ENCODE measurements at regions of chr11 and their contacts with region 1.

Region 1: DNA sequence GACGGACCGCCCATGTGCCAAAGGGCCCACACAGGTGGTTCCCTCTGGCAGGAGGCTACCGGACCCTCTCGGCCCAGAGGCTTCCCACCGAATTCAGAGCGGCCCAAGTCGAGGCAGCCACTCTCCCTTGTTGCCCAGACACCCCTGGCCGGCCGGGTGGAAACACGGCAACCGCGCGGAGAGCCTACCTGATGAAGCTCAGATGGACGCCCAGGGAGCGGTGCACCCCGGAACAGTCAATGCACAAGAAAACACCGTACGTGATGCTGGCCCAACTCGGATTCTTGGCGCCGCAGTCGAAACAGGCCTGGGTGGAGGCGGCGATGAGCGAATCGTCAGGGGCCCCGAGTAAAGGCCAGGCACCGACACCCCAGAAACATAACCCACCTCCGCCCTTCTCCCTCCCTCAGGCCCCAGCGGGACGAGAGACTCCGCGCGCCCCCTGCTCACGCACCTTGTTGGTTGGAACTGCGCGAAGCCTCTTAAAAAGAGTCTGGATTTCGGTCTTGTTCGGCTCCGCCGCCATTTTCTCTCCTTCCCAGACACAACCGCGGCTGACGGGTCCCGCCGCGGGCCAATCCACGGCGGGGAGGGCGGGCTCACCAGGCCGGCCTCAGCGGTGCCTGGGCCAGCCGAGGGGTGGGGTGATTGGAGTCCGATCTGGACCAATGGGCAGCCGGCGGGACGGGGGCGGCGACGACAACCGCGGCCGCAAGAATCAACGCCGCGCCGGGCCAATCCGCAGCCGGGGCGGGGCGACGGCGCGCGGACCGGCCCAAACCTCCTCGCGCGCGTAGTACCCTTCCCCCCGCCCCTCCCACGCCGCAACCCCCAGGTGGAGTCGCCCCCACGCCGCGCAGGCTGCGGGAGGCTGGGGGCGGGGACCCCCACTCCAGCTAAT is at the start of gene ARFGAP2:
- DNase-seq: peak; percentile 98
- ATAC-seq: peak; percentile 90
- H3K4me3 ChIP-seq: peak within 1 kb of the TSS; percentile 78 to 98 (median 96)
- H3K4me3 Mint-ChIP-seq: peak within 1 kb of the TSS; percentile 100
- H3K27ac ChIP-seq: peak within 1 kb of the TSS; percentile 92
- H3K27ac Mint-ChIP-seq: peak within 1 kb of the TSS; percentile 100
- H3K4me1 ChIP-seq: peaks cover 17 to 28% of the 10 kb centered on the region in 2 donors
- H3K4me1 Mint-ChIP-seq: peaks cover 33% of the 10 kb centered on the region
- H3K27me3 ChIP-seq: no peaks in the 10 kb centered on the region
- H3K27me3 Mint-ChIP-seq: no peaks in the 10 kb centered on the region
- CTCF ChIP-seq: no peak
- total RNA-seq, gene ARFGAP2: 200 and 214 TPM in 2 replicates

Region 2: GRCh38 chr11:46700241-46701077 is 476.1 kb before region 1 on chr11 and contains the starts of genes ARHGAP1 and ZNF408:
- CTCF ChIA-PET with region 1: no interaction called
- POLR2A ChIA-PET with region 1: no interaction called
- intact Hi-C with region 1: loop called (anchors 5 kb)
- DNase-seq: peak; percentile 99
- ATAC-seq: peak; percentile 90
- H3K4me3 ChIP-seq: peak within 1 kb of the TSS; percentile 87 to 100 (median 98)
- H3K4me3 Mint-ChIP-seq: peak within 1 kb of the TSS; percentile 96
- H3K27ac ChIP-seq: peak within 1 kb of the TSS; percentile 47 to 86
- H3K27ac Mint-ChIP-seq: peak within 1 kb of the TSS; percentile 93
- H3K4me1 ChIP-seq: peaks cover 30 to 39% of the 10 kb centered on the region in 2 donors
- H3K4me1 Mint-ChIP-seq: peaks cover 43% of the 10 kb centered on the region
- H3K27me3 ChIP-seq: no peaks in the 10 kb centered on the region
- H3K27me3 Mint-ChIP-seq: no peaks in the 10 kb centered on the region
- CTCF ChIP-seq: no peak
- total RNA-seq, gene ARHGAP1: 55.0 and 56.8 TPM in 2 replicates
- total RNA-seq, gene ZNF408: 19.2 and 22.3 TPM in 2 replicates

Region 3: DNA sequence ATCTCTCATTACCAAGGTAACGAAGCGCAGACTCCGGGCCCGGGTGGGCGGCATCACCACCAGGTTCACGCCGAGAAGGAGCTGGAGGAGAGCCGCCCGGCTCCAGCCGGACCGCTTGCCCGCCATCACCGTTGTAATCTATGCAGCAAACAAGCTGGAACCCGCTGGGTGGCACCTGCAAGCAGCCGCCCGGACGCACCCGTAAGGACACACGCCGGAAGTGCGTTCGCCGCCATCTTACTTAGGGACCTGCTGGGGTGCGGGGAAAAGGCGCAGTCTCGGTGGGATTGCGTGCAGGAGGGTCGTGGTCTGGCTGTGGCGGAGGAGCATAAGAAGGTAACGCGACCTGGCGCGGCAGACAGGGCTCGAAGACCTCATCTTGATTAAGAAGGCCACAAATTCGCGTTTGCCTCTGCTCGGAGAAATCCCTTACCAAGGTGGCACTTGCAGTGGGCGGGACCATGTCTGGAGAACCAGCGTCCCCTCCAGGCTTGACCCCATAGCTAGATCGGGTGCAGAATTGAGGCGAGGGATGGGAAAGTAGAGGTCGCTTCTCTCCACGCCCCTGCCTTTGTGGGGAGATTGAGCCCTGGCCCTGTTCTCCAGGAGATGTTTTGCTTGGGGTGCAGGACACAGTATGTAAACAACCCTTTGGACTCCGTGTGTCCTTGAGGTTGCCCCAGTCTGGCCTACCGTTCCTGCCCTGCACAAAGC is 72.2 kb after region 1 on chr11 and contains the start of gene ACP2:
- CTCF ChIA-PET with region 1: interaction called, 12 read pairs
- POLR2A ChIA-PET with region 1: no interaction called
- intact Hi-C with region 1: loop called (anchors 1 kb)
- DNase-seq: peak; percentile 94
- ATAC-seq: peak; percentile 94
- H3K4me3 ChIP-seq: peak within 1 kb of the TSS; percentile 65 to 99 (median 90)
- H3K4me3 Mint-ChIP-seq: peak within 1 kb of the TSS; percentile 99
- H3K27ac ChIP-seq: peak within 1 kb of the TSS; percentile 56 to 79
- H3K27ac Mint-ChIP-seq: peak within 1 kb of the TSS; percentile 99
- H3K4me1 ChIP-seq: peaks cover 13 to 22% of the 10 kb centered on the region in 2 donors
- H3K4me1 Mint-ChIP-seq: peaks cover 24% of the 10 kb centered on the region
- H3K27me3 ChIP-seq: no peaks in the 10 kb centered on the region
- H3K27me3 Mint-ChIP-seq: no peaks in the 10 kb centered on the region
- CTCF ChIP-seq: no peak
- total RNA-seq, gene ACP2: 23.5 and 29.5 TPM in 2 replicates

Region 4: GRCh38 chr11:47373876-47374720 is 197.5 kb after region 1 on chr11:
- CTCF ChIA-PET with region 1: interaction called, 4 read pairs
- POLR2A ChIA-PET with region 1: no interaction called
- intact Hi-C with region 1: loop called (anchors 2 kb)
- DNase-seq: peak; percentile 83
- ATAC-seq: peak; percentile 35
- H3K4me3 ChIP-seq: no peak overlapping the region
- H3K4me3 Mint-ChIP-seq: peak overlapping the region; percentile 41
- H3K27ac ChIP-seq: peak overlapping the region in 1 of 2 donors; percentile 68
- H3K27ac Mint-ChIP-seq: peak overlapping the region; percentile 65
- H3K4me1 ChIP-seq: peaks cover 40 to 46% of the 10 kb centered on the region in 2 donors
- H3K4me1 Mint-ChIP-seq: peaks cover 51% of the 10 kb centered on the region
- H3K27me3 ChIP-seq: no peaks in the 10 kb centered on the region
- H3K27me3 Mint-ChIP-seq: no peaks in the 10 kb centered on the region
- CTCF ChIP-seq: peak; percentile 91

Region 5: GRCh38 chr11:47426061-47426956 is 249.7 kb after region 1 on chr11 and contains the start of gene PSMC3:
- CTCF ChIA-PET with region 1: no interaction called
- POLR2A ChIA-PET with region 1: no interaction called
- intact Hi-C with region 1: loop called (anchors 1 kb)
- DNase-seq: peak; percentile 97
- ATAC-seq: peak; percentile 98
- H3K4me3 ChIP-seq: peak within 1 kb of the TSS; percentile 88 to 99 (median 93)
- H3K4me3 Mint-ChIP-seq: peak within 1 kb of the TSS; percentile 100
- H3K27ac ChIP-seq: peak within 1 kb of the TSS; percentile 78 to 94
- H3K27ac Mint-ChIP-seq: peak within 1 kb of the TSS; percentile 98
- H3K4me1 ChIP-seq: peaks cover 9 to 22% of the 10 kb centered on the region in 2 donors
- H3K4me1 Mint-ChIP-seq: peaks cover 25% of the 10 kb centered on the region
- H3K27me3 ChIP-seq: no peaks in the 10 kb centered on the region
- H3K27me3 Mint-ChIP-seq: no peaks in the 10 kb centered on the region
- CTCF ChIP-seq: no peak
- total RNA-seq, gene PSMC3: 59.9 and 62.7 TPM in 2 replicates

Region 6: GRCh38 chr11:47847892-47848635 is 671.5 kb after region 1 on chr11 and contains the start of gene NUP160:
- CTCF ChIA-PET with region 1: interaction called, 3 read pairs
- POLR2A ChIA-PET with region 1: no interaction called
- intact Hi-C with region 1: loop called (anchors 5 kb)
- DNase-seq: peak; percentile 92
- ATAC-seq: peak; percentile 77
- H3K4me3 ChIP-seq: peak within 1 kb of the TSS; percentile 93 to 99 (median 98)
- H3K4me3 Mint-ChIP-seq: peak within 1 kb of the TSS; percentile 99
- H3K27ac ChIP-seq: peak within 1 kb of the TSS; percentile 94 to 95
- H3K27ac Mint-ChIP-seq: peak within 1 kb of the TSS; percentile 98
- H3K4me1 ChIP-seq: peaks cover 62 to 66% of the 10 kb centered on the region in 2 donors
- H3K4me1 Mint-ChIP-seq: peaks cover 57% of the 10 kb centered on the region
- H3K27me3 ChIP-seq: no peaks in the 10 kb centered on the region
- H3K27me3 Mint-ChIP-seq: no peaks in the 10 kb centered on the region
- CTCF ChIP-seq: no peak
- total RNA-seq, gene NUP160: 74.3 and 77.3 TPM in 2 replicates

Measured in B cell (primary cell).